Prostate gland (tissue), 2 donors: ENCODE measurements at regions of chr6 and their contacts with region 1.

Region 1: DNA sequence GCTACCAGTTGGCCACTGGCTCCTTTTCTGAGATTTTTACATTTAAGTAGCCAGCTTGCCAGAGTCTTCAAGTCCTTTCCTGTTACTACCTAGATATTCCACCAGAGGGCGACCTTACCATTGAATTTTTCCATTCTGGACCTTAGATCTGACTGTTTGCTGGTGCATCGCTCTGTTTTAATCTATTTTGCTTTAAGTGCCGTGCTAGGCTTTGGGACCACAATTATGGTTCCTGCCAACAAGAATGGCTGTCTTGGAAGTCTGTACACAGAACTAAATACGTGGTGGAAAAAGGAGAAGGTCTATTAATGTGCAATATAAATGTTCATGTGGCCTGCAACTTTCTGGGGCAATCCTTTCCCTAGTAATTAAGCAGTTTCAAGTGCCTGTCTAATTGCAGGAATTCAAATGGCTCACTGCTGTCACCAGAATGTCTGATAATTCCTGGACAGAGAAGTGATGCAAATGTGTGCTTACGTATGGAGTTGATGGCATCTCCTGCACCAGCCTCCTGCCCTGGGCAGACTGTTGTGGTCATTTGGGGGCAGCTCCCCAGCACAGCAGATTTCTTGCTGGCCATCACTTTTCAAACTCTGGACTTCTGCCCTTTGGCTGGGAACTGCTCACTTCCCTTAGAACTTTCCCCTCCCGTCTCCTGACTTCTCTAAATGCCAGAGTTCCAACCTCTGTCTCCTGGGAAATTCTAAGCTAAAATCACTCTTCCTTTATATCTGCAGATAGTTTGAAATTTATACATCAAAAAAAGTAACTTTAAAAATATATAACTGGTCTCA is 5.6 kb upstream of the HLA-DOA start:
- DNase-seq: peak; percentile 62
- H3K4me3 ChIP-seq: no peak overlapping the region
- H3K27ac ChIP-seq: no peak overlapping the region
- H3K4me1 ChIP-seq: no peaks in the 10 kb centered on the region
- H3K27me3 ChIP-seq: no peaks in the 10 kb centered on the region
- CTCF ChIP-seq: peak; percentile 65 to 88 (median 83)
- POLR2A ChIP-seq: no peak

Region 2: DNA sequence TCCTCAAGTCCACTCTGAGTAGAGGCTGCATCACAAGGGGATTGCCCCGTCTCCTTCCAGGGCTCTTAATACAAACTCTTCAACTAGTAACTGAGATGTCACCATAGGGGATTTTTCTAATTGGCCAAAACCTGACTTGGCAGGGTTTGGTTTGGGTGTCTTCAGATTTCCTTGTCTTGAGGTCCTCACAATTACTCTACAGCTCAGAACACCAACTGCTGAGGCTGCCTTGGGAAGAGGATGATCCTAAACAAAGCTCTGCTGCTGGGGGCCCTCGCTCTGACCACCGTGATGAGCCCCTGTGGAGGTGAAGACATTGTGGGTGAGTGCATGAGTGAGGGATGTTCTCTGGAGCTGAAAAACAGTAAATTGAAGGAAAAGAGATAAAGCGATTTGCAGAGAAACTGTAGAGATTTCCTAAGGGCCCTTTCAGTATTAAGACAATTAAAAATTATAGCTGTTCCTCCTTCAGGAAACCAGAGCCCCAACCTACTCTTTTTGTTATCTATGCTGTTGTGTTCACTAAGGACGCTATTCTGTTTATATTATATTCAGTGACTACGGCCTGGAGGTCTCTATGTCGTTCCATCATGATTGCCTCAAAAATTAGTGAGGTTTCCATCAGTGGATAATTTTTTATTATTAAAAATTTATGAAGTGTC is 377.7 kb before region 1 on chr6 and contains the start of gene HLA-DQA1:
- intact Hi-C with region 1: no loop called
- DNase-seq: no peak
- H3K4me3 ChIP-seq: no peak within 1 kb of the TSS
- H3K27ac ChIP-seq: no peak within 1 kb of the TSS
- H3K4me1 ChIP-seq: no peaks in the 10 kb centered on the region
- H3K27me3 ChIP-seq: no peaks in the 10 kb centered on the region
- CTCF ChIP-seq: no peak
- POLR2A ChIP-seq: no peak
- total RNA-seq, gene HLA-DQA1: 2.4 to 3.7 TPM

Region 3: GRCh38 chr6:33082702-33083101 is 67.7 kb after region 1 on chr6:
- intact Hi-C with region 1: loop called (anchors 2 kb)
- DNase-seq: no peak
- H3K4me3 ChIP-seq: no peak overlapping the region
- H3K27ac ChIP-seq: no peak overlapping the region
- H3K4me1 ChIP-seq: no peaks in the 10 kb centered on the region
- H3K27me3 ChIP-seq: no peaks in the 10 kb centered on the region
- CTCF ChIP-seq: peak in 2 of 4 experiments; percentile 9 to 51
- POLR2A ChIP-seq: no peak

Region 4: DNA sequence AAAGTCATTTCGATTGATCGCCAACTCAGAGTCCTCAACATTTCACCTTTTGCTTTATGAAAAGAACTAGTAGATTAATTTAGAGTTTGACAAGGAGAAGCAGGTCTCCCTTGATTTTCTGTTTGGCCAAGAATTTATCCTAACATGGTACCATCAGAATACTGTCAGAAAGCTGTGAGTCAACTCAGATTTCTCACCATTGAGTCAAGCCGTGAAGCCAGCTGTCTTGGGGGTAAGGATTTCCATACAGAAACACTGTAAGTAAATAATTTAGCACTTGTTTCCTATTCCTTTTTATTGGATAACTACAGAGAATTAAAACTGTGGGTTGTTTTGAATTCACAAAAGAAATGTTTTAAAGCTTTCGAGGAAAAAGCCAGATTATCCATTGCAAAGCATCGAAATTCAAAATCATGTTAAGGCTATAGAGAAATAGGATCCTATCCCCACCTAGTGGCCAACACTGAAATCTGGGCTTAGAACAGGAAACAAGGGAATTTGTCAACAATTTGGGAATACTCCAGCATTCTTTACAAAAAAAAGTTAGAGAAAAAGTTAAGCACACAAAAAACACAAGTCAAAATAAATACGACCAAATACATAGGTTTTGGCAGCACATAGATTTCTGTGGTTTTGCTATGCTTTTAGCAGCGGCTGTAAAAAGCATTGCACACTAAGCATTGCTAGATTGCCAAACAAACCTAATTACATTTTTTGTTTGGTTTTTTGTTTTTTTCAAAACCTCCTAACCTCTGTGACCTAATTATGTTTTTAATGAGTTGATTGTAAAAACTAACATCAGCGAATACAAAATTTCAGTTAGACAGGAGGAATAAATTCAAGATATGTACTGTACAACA is 133.0 kb after region 1 on chr6:
- intact Hi-C with region 1: loop called (anchors 10 kb)
- DNase-seq: peak; percentile 27
- H3K4me3 ChIP-seq: no peak overlapping the region
- H3K27ac ChIP-seq: no peak overlapping the region
- H3K4me1 ChIP-seq: no peaks in the 10 kb centered on the region
- H3K27me3 ChIP-seq: no peaks in the 10 kb centered on the region
- CTCF ChIP-seq: peak in 3 of 4 experiments; percentile 71 to 84 (median 83)
- POLR2A ChIP-seq: no peak

Region 5: DNA sequence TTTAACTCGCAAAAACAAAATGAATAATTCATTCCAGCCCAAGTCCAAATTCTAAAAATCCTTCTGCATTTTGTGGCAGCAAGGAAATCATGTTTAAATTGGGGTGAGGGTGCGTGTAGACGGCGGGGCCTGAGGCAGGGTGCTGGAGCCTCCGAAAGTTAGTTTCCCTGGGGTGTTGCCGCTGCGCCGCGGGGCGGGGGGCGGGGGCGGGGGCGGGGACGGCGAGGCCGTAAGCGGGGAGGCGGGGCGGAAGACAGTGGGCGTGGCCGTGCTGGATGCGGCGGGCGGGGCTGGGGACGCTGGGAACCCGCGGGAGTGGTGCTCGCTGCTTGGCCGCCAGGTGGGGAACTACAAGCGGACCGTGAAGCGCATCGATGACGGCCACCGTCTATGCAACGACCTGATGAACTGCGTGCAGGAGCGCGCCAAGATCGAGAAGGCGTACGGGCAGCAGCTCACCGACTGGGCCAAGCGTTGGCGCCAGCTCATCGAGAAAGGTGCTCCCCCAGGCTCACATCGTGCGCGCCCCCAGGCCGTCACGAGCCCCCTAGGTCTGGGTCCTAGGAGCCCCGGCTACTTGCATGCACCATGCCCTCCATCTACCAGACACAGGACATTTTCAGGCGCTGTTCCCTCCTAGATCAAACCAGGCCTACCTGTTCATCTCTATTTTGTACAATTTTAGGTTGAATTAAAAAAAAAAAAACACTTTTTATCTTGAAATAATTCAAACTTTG is 1512.1 kb after region 1 on chr6:
- intact Hi-C with region 1: no loop called
- DNase-seq: peak; percentile 95
- H3K4me3 ChIP-seq: peak overlapping the region in 1 of 2 donors; percentile 11
- H3K27ac ChIP-seq: peak overlapping the region; percentile 14 to 46
- H3K4me1 ChIP-seq: no peaks in the 10 kb centered on the region
- H3K27me3 ChIP-seq: no peaks in the 10 kb centered on the region
- CTCF ChIP-seq: peak; percentile 70 to 91 (median 78)
- POLR2A ChIP-seq: peak; percentile 4